CD8-positive, alpha-beta T cell (primary cell): ENCODE measurements at regions of chr1 and their contacts with region 1.

Region 1: DNA sequence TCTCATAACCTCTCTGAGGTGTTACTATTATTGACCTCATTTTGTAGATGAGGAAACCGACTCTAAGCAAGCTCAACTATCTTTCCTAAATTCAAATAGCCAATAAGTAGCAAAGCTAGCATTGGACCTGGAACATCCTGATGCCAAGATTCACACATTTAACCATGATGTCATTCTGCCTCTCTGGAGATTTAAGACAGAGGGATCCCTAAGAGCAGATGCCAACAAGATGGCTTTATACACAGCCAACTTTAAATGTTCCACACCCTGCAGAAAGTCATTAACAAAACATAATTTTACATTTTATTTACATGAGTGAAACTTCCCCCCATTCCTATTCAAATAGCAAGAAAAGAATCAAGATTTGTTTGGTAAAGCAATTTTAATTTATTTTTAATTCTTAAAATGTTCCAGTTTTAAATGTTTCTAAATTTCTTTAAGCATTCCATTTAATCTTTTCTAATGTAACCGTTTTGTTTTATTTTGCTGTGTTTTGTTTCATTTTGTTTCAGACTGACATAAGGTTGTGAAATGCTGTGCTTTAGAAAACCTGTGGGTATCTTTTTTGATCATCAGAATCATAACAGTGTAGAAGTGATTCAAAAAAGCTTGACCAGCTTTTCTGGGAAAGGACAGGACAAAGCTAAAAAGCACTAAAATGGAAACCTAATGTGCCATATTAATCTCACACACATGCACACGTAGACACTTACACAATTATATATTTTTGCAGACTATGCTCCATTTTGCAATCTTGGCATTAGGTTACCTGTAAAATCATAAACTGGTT is 7.6 kb upstream of the VAV3 start:
- DNase-seq: no peak
- ATAC-seq: no peak
- H3K4me3 ChIP-seq: no peak overlapping the region
- H3K4me3 Mint-ChIP-seq: no peak overlapping the region
- H3K27ac ChIP-seq: no peak overlapping the region
- H3K27ac Mint-ChIP-seq: no peak overlapping the region
- H3K4me1 ChIP-seq: no peaks in the 10 kb centered on the region
- H3K4me1 Mint-ChIP-seq: no peaks in the 10 kb centered on the region
- H3K27me3 ChIP-seq: no peaks in the 10 kb centered on the region
- H3K27me3 Mint-ChIP-seq: no peaks in the 10 kb centered on the region
- CTCF ChIP-seq: no peak

Region 2: GRCh38 chr1:106836708-106837107 is 1135.9 kb before region 1 on chr1:
- CTCF ChIA-PET with region 1: no interaction called
- POLR2A ChIA-PET with region 1: no interaction called
- intact Hi-C with region 1: no loop called
- DNase-seq: no peak
- ATAC-seq: no peak
- H3K4me3 ChIP-seq: no peak overlapping the region
- H3K4me3 Mint-ChIP-seq: no peak overlapping the region
- H3K27ac ChIP-seq: no peak overlapping the region
- H3K27ac Mint-ChIP-seq: no peak overlapping the region
- H3K4me1 ChIP-seq: no peaks in the 10 kb centered on the region
- H3K4me1 Mint-ChIP-seq: no peaks in the 10 kb centered on the region
- H3K27me3 ChIP-seq: no peaks in the 10 kb centered on the region
- H3K27me3 Mint-ChIP-seq: no peaks in the 10 kb centered on the region
- CTCF ChIP-seq: no peak

Region 3: DNA sequence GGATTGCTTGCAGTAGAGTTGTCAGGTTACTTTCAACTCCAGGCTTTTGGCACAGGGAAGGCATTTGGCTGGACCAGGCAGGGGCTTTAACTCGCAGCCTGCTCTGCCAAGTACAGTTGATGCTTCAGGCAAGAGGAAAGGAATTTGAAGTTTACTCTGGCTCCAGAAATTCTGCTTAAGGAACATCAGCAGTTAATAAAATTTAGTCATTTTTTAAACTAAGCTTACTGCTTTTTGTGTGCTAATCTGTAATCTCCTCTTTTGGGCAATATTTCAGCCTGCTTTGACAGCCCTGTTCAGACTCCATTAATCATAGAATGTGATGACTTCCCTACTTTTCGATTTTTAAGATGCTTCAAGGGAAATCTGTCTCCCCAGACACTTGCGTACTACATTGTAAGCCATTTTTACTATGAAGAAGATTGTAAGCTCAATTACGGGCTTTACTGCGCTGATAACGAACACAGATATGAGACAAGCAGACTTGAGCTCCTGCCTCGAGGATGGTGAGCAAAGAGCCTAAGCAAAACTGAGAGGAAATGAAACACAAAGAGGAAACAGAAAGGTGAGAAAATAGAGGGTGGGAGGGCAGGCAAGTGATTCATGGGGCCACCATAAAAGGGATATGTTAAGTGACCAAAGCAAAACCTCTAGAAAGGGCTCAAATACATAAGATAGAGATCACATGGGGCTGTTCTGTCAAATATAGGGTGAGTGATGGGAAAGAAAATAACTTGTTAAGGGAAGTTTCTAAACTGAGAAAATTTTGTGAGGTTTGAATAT is 69.0 kb after region 1 on chr1:
- CTCF ChIA-PET with region 1: no interaction called
- POLR2A ChIA-PET with region 1: no interaction called
- intact Hi-C with region 1: loop called in 1 of 2 experiments (anchors 5 kb)
- DNase-seq: peak in 2 of 9 experiments; percentile 35 to 54
- ATAC-seq: peak; percentile 59
- H3K4me3 ChIP-seq: no peak overlapping the region
- H3K4me3 Mint-ChIP-seq: peak overlapping the region; percentile 16
- H3K27ac ChIP-seq: peak overlapping the region in 1 of 2 experiments; percentile 63
- H3K27ac Mint-ChIP-seq: peak overlapping the region; percentile 68
- H3K4me1 ChIP-seq: peaks cover 24% of the 10 kb centered on the region
- H3K4me1 Mint-ChIP-seq: peaks cover 34% of the 10 kb centered on the region
- H3K27me3 ChIP-seq: no peaks in the 10 kb centered on the region
- H3K27me3 Mint-ChIP-seq: no peaks in the 10 kb centered on the region
- CTCF ChIP-seq: no peak